ENCODE measurements at regions of chr11 and their contacts with region 1.

Region 1: DNA sequence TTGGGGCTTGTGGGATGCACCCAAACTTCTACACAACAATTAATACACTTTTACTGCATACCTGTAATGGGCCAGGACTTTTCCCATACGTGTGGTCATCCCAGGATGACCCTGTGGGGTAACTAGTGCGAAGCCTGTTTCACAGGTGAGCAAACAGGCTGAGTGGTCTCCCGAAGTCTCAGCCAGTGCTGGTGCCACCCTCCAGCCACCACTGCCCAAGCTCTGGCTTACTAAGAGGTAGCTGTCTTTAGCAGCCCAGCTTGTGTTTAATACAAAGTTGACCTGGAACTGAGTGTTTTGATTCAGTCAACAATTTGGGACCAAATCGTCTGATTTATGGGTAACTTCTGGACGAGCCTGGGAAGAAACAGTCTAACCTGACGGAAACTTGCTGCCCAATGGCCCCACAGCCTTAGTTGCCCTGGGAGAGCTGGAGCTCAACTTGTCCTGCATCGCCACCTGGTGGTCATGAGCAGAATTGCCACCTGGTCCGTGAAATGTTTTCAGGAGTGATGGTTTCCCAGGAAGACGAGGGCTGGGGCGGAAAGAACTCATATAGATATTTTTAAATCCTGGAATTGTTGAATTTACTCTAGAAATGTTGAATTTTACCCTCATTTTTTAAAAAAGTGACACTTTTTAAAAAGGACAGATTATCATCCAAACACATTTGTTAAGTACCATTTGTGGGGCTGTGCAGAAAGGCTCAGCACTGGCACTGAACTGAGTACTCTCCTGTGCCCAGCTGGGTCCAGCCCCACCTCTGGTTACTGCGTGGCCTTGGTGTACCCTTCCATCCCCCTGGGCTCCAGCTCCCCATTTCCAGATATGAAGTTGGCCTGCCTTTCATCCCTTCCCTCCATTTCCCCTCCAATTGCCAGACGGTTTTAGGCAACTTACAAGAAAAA is 95.5 kb upstream of the PARVA start:
- DNase-seq: peak; percentile 53 to 87 (median 81)
- ATAC-seq: peak; percentile 64
- H3K4me3 ChIP-seq: no peak overlapping the region
- H3K4me3 Mint-ChIP-seq: no peak overlapping the region
- H3K27ac ChIP-seq: no peak overlapping the region
- H3K27ac Mint-ChIP-seq: no peak overlapping the region
- H3K4me1 ChIP-seq: no peaks in the 10 kb centered on the region
- H3K4me1 Mint-ChIP-seq: no peaks in the 10 kb centered on the region
- H3K27me3 ChIP-seq: no peaks in the 10 kb centered on the region
- H3K27me3 Mint-ChIP-seq: no peaks in the 10 kb centered on the region
- CTCF ChIP-seq: peak; percentile 92

Region 2: GRCh38 chr11:11931461-11932055 is 350.3 kb before region 1 on chr11:
- CTCF ChIA-PET with region 1: interaction called, 10 read pairs
- POLR2A ChIA-PET with region 1: no interaction called
- intact Hi-C with region 1: loop called (anchors 2 to 5 kb)
- DNase-seq: peak in 3 of 9 experiments; percentile 14 to 63 (median 50)
- ATAC-seq: peak; percentile 64
- H3K4me3 ChIP-seq: no peak overlapping the region
- H3K4me3 Mint-ChIP-seq: no peak overlapping the region
- H3K27ac ChIP-seq: no peak overlapping the region
- H3K27ac Mint-ChIP-seq: no peak overlapping the region
- H3K4me1 ChIP-seq: no peaks in the 10 kb centered on the region
- H3K4me1 Mint-ChIP-seq: peaks cover 5% of the 10 kb centered on the region
- H3K27me3 ChIP-seq: no peaks in the 10 kb centered on the region
- H3K27me3 Mint-ChIP-seq: no peaks in the 10 kb centered on the region
- CTCF ChIP-seq: peak; percentile 77

Region 3: GRCh38 chr11:12052676-12053605 is 228.9 kb before region 1 on chr11:
- CTCF ChIA-PET with region 1: interaction called, 375 read pairs
- POLR2A ChIA-PET with region 1: interaction called, 3 read pairs
- intact Hi-C with region 1: no loop called
- DNase-seq: peak in 4 of 9 experiments; percentile 28 to 48 (median 38)
- ATAC-seq: no peak
- H3K4me3 ChIP-seq: no peak overlapping the region
- H3K4me3 Mint-ChIP-seq: no peak overlapping the region
- H3K27ac ChIP-seq: no peak overlapping the region
- H3K27ac Mint-ChIP-seq: no peak overlapping the region
- H3K4me1 ChIP-seq: no peaks in the 10 kb centered on the region
- H3K4me1 Mint-ChIP-seq: no peaks in the 10 kb centered on the region
- H3K27me3 ChIP-seq: no peaks in the 10 kb centered on the region
- H3K27me3 Mint-ChIP-seq: no peaks in the 10 kb centered on the region
- CTCF ChIP-seq: no peak

Region 4: DNA sequence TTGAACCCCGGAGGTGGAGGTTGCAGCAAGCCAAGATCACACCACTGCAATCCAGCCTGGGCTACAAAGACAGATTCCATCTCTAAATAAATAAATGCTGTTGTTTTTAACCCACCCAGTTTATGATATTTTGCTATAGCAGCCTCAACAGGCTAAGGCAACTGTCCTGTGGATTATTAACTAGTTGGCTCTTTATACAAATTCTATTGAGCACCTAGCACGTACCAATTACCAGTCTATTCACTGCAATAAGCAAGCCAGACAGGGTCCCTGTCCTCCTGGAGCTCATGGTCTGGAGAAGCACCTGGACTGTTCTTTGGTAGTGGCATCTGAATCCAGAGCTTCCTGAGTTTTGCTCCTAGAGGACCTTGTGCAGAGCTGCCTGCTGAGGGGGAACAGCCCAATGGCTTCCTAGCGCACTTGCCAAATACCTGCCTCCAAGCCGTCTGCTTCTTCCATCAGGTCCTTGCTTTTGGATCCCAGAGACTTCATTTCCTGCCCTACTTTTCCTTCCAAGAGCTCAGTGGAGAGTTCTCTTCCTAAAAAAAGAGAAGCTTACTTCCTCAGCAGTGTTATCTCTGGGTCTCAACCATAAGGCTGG is 221.3 kb before region 1 on chr11:
- CTCF ChIA-PET with region 1: interaction called, 102 read pairs
- POLR2A ChIA-PET with region 1: no interaction called
- intact Hi-C with region 1: no loop called
- DNase-seq: no peak
- ATAC-seq: no peak
- H3K4me3 ChIP-seq: no peak overlapping the region
- H3K4me3 Mint-ChIP-seq: no peak overlapping the region
- H3K27ac ChIP-seq: no peak overlapping the region
- H3K27ac Mint-ChIP-seq: no peak overlapping the region
- H3K4me1 ChIP-seq: no peaks in the 10 kb centered on the region
- H3K4me1 Mint-ChIP-seq: peaks cover 4% of the 10 kb centered on the region
- H3K27me3 ChIP-seq: no peaks in the 10 kb centered on the region
- H3K27me3 Mint-ChIP-seq: no peaks in the 10 kb centered on the region
- CTCF ChIP-seq: no peak

Region 5: GRCh38 chr11:12087075-12088004 is 194.5 kb before region 1 on chr11:
- CTCF ChIA-PET with region 1: interaction called, 11 read pairs
- POLR2A ChIA-PET with region 1: no interaction called
- intact Hi-C with region 1: no loop called
- DNase-seq: peak in 7 of 9 experiments; percentile 19 to 83 (median 54)
- ATAC-seq: peak; percentile 89
- H3K4me3 ChIP-seq: peak overlapping the region in 1 of 2 experiments; percentile 20
- H3K4me3 Mint-ChIP-seq: peak overlapping the region; percentile 30
- H3K27ac ChIP-seq: peak overlapping the region in 1 of 2 experiments; percentile 52
- H3K27ac Mint-ChIP-seq: peak overlapping the region; percentile 84
- H3K4me1 ChIP-seq: peaks cover 55% of the 10 kb centered on the region
- H3K4me1 Mint-ChIP-seq: peaks cover 71% of the 10 kb centered on the region
- H3K27me3 ChIP-seq: no peaks in the 10 kb centered on the region
- H3K27me3 Mint-ChIP-seq: no peaks in the 10 kb centered on the region
- CTCF ChIP-seq: no peak

Region 6: DNA sequence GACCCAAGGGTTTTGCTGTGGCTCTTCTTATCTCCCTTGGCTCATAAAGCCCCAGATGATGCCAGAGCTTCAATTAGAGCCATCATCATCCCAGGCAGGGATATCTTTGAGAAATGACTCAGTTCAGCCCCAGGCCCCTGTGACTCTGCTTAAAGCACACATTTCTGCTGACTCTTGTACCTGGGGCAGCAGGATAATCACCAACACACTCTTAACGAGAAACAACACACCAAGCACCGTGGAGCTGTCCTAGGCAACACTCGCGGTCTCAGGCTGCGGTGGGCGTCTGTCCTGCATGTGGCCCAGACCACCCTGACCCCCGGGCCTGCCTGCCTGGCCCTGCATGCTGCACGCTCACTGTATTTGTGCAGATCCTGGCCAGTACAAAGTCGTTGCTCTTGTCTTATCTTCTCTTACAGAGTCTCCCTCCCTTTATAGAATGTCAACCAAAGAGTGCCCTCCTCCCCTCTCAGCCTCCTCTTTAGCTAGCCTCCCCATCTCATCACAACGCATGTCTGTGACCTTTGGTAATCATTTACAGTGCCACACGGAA is 18.6 kb before region 1 on chr11:
- CTCF ChIA-PET with region 1: interaction called, 37 read pairs
- POLR2A ChIA-PET with region 1: no interaction called
- intact Hi-C with region 1: no loop called
- DNase-seq: no peak
- ATAC-seq: no peak
- H3K4me3 ChIP-seq: no peak overlapping the region
- H3K4me3 Mint-ChIP-seq: no peak overlapping the region
- H3K27ac ChIP-seq: no peak overlapping the region
- H3K27ac Mint-ChIP-seq: no peak overlapping the region
- H3K4me1 ChIP-seq: no peaks in the 10 kb centered on the region
- H3K4me1 Mint-ChIP-seq: no peaks in the 10 kb centered on the region
- H3K27me3 ChIP-seq: no peaks in the 10 kb centered on the region
- H3K27me3 Mint-ChIP-seq: no peaks in the 10 kb centered on the region
- CTCF ChIP-seq: no peak

Region 7: GRCh38 chr11:12269104-12269441 is 12.8 kb before region 1 on chr11:
- CTCF ChIA-PET with region 1: interaction called, 37 read pairs
- POLR2A ChIA-PET with region 1: no interaction called
- intact Hi-C with region 1: no loop called
- DNase-seq: no peak
- ATAC-seq: no peak
- H3K4me3 ChIP-seq: no peak overlapping the region
- H3K4me3 Mint-ChIP-seq: no peak overlapping the region
- H3K27ac ChIP-seq: no peak overlapping the region
- H3K27ac Mint-ChIP-seq: no peak overlapping the region
- H3K4me1 ChIP-seq: no peaks in the 10 kb centered on the region
- H3K4me1 Mint-ChIP-seq: no peaks in the 10 kb centered on the region
- H3K27me3 ChIP-seq: no peaks in the 10 kb centered on the region
- H3K27me3 Mint-ChIP-seq: no peaks in the 10 kb centered on the region
- CTCF ChIP-seq: no peak